ENCODE measurements at regions of chr11 and their contacts with region 1.

Region 1: GRCh38 chr11:95111923-95112540 is 22.4 kb downstream of the ENDOD1 start:
- DNase-seq: no peak
- H3K4me3 ChIP-seq: no peak overlapping the region
- H3K27ac ChIP-seq: no peak overlapping the region
- H3K4me1 ChIP-seq: peaks cover 43% of the 10 kb centered on the region
- H3K27me3 ChIP-seq: no peaks in the 10 kb centered on the region
- CTCF ChIP-seq: no peak
- POLR2A ChIP-seq: no peak

Region 2: GRCh38 chr11:95138448-95138847 is 26.4 kb after region 1 on chr11:
- intact Hi-C with region 1: loop called (anchors 2 kb)
- DNase-seq: no peak
- H3K4me3 ChIP-seq: no peak overlapping the region
- H3K27ac ChIP-seq: no peak overlapping the region
- H3K4me1 ChIP-seq: peaks cover 13% of the 10 kb centered on the region
- H3K27me3 ChIP-seq: no peaks in the 10 kb centered on the region
- CTCF ChIP-seq: no peak
- POLR2A ChIP-seq: no peak

Region 3: GRCh38 chr11:96412761-96413381 is 1300.8 kb after region 1 on chr11:
- intact Hi-C with region 1: no loop called
- DNase-seq: no peak
- H3K4me3 ChIP-seq: no peak overlapping the region
- H3K27ac ChIP-seq: no peak overlapping the region
- H3K4me1 ChIP-seq: no peaks in the 10 kb centered on the region
- H3K27me3 ChIP-seq: no peaks in the 10 kb centered on the region
- CTCF ChIP-seq: no peak
- POLR2A ChIP-seq: no peak

Measured in vagina (tissue), 2 donors.